Activated CD4-positive, alpha-beta memory T cell treated with anti-CD3 and anti-CD28 coated beads, Interleukin-2, amount 10 ng/mL, durations not matched to agents 7 days and 5 days (primary cell): ENCODE measurements at regions of chr6 and their contacts with region 1.

Region 1: GRCh38 chr6:138692058-138692977 is 81.3 kb upstream of the CCDC28A start:
- DNase-seq: peak; percentile 64
- H3K4me3 Mint-ChIP-seq: peak overlapping the region; percentile 70
- H3K27ac Mint-ChIP-seq: no peak overlapping the region
- H3K4me1 Mint-ChIP-seq: peaks cover 10% of the 10 kb centered on the region
- H3K27me3 Mint-ChIP-seq: peaks cover 51% of the 10 kb centered on the region

Region 2: GRCh38 chr6:138517635-138518034 is 174.7 kb before region 1 on chr6:
- CTCF ChIA-PET with region 1: no interaction called
- POLR2A ChIA-PET with region 1: no interaction called
- DNase-seq: peak; percentile 67
- H3K4me3 Mint-ChIP-seq: no peak overlapping the region
- H3K27ac Mint-ChIP-seq: no peak overlapping the region
- H3K4me1 Mint-ChIP-seq: peaks cover 31% of the 10 kb centered on the region
- H3K27me3 Mint-ChIP-seq: peaks cover 4% of the 10 kb centered on the region

Region 3: GRCh38 chr6:138765896-138766655 is 73.8 kb after region 1 on chr6:
- CTCF ChIA-PET with region 1: interaction called, 14 read pairs
- POLR2A ChIA-PET with region 1: no interaction called
- DNase-seq: no peak
- H3K4me3 Mint-ChIP-seq: no peak overlapping the region
- H3K27ac Mint-ChIP-seq: no peak overlapping the region
- H3K4me1 Mint-ChIP-seq: peaks cover 5% of the 10 kb centered on the region
- H3K27me3 Mint-ChIP-seq: no peaks in the 10 kb centered on the region

Region 4: GRCh38 chr6:138773177-138774091 is 81.1 kb after region 1 on chr6 and contains the start of gene CCDC28A:
- CTCF ChIA-PET with region 1: interaction called, 11 read pairs
- POLR2A ChIA-PET with region 1: interaction called, 5 read pairs
- DNase-seq: peak; percentile 93
- H3K4me3 Mint-ChIP-seq: peak within 1 kb of the TSS; percentile 100
- H3K27ac Mint-ChIP-seq: peak within 1 kb of the TSS; percentile 100
- H3K4me1 Mint-ChIP-seq: peaks cover 36% of the 10 kb centered on the region
- H3K27me3 Mint-ChIP-seq: no peaks in the 10 kb centered on the region
- total RNA-seq, gene CCDC28A: 28.0 to 28.7 TPM